PC-3 (cell line): ENCODE measurements at regions of chr5 and their contacts with region 1.

Region 1: DNA sequence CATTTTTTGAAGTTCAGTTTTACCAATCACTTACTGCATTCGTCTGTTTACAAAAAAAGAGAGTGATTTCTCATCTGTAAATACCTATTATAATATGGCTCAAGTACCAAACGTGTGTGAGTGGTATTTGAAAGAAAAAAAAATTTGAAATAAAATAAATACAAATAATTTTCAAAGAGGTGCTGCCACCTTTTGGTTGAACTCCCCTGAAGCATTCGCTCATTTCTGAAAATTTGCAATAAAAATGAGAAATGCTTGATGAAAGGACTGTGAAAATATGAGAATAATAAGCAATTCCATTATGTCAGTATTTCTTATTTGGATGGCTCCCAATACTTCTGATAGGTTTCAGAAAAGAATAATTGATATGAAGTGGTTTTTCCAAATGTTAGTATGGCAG is 409.9 kb downstream of the CTNND2 start:
- DNase-seq: peak; percentile 52
- ATAC-seq: no peak
- H3K4me3 ChIP-seq: no peak overlapping the region
- H3K27ac ChIP-seq: no peak overlapping the region
- H3K4me1 ChIP-seq: no peaks in the 10 kb centered on the region
- H3K27me3 ChIP-seq: no peaks in the 10 kb centered on the region
- CTCF ChIP-seq: peak; percentile 78

Region 2: GRCh38 chr5:11311272-11311671 is 183.1 kb before region 1 on chr5:
- CTCF ChIA-PET with region 1: no interaction called
- POLR2A ChIA-PET with region 1: no interaction called
- intact Hi-C with region 1: no loop called
- DNase-seq: no peak
- ATAC-seq: no peak
- H3K4me3 ChIP-seq: no peak overlapping the region
- H3K27ac ChIP-seq: no peak overlapping the region
- H3K4me1 ChIP-seq: no peaks in the 10 kb centered on the region
- H3K27me3 ChIP-seq: peaks cover 3% of the 10 kb centered on the region; the same call in 1 of the 2 replicates
- CTCF ChIP-seq: no peak

Region 3: DNA sequence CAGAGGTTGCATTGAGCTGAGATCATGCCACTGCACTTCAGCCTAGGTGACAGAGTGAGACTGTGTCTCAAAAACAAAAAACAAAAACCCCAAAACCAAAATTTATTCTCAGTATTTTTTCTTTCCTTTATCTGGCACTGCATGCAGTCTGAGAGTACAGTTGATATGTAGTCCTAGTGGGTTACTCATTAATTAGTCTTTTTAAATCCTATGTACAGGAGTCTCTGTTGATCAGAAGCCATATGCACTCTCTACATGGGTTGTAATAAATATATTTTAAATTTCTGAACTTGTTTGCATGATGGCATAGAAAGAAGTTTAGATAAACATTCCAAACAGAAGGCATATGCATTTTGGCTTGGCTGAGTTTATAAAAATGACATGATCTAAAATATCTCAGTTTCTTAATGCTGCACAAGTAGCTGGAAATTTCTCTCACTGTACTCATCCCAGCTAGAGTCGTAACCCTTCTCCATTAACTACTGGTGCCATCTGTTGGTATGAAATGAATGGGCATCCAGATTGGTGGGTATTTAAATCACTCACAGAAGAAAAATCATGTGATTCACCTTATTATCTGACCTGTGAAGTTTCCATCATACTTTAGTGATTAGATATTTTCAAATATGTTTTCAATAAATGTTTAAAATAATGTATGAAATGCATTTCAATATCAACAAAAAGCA is 125.1 kb after region 1 on chr5:
- CTCF ChIA-PET with region 1: no interaction called
- POLR2A ChIA-PET with region 1: no interaction called
- intact Hi-C with region 1: loop called (anchors 5 kb)
- DNase-seq: peak; percentile 59
- ATAC-seq: peak; percentile 62; the same call in 1 of the 2 replicates
- H3K4me3 ChIP-seq: no peak overlapping the region
- H3K27ac ChIP-seq: no peak overlapping the region
- H3K4me1 ChIP-seq: no peaks in the 10 kb centered on the region
- H3K27me3 ChIP-seq: no peaks in the 10 kb centered on the region
- CTCF ChIP-seq: peak; percentile 65

Region 4: GRCh38 chr5:11931638-11932037 is 437.3 kb after region 1 on chr5:
- CTCF ChIA-PET with region 1: no interaction called
- POLR2A ChIA-PET with region 1: no interaction called
- intact Hi-C with region 1: no loop called
- DNase-seq: no peak
- ATAC-seq: no peak
- H3K4me3 ChIP-seq: no peak overlapping the region
- H3K27ac ChIP-seq: no peak overlapping the region
- H3K4me1 ChIP-seq: no peaks in the 10 kb centered on the region
- H3K27me3 ChIP-seq: peaks cover 7% of the 10 kb centered on the region; the same call in 1 of the 2 replicates
- CTCF ChIP-seq: no peak

Region 5: GRCh38 chr5:12023614-12024241 is 529.4 kb after region 1 on chr5:
- CTCF ChIA-PET with region 1: no interaction called
- POLR2A ChIA-PET with region 1: no interaction called
- intact Hi-C with region 1: loop called (anchors 10 kb)
- DNase-seq: peak; percentile 93
- ATAC-seq: peak; percentile 38; the same call in 1 of the 2 replicates
- H3K4me3 ChIP-seq: no peak overlapping the region
- H3K27ac ChIP-seq: no peak overlapping the region
- H3K4me1 ChIP-seq: no peaks in the 10 kb centered on the region
- H3K27me3 ChIP-seq: no peaks in the 10 kb centered on the region
- CTCF ChIP-seq: peak; percentile 97